B cell (primary cell): ENCODE measurements at regions of chr3 and their contacts with region 1.

Region 1: DNA sequence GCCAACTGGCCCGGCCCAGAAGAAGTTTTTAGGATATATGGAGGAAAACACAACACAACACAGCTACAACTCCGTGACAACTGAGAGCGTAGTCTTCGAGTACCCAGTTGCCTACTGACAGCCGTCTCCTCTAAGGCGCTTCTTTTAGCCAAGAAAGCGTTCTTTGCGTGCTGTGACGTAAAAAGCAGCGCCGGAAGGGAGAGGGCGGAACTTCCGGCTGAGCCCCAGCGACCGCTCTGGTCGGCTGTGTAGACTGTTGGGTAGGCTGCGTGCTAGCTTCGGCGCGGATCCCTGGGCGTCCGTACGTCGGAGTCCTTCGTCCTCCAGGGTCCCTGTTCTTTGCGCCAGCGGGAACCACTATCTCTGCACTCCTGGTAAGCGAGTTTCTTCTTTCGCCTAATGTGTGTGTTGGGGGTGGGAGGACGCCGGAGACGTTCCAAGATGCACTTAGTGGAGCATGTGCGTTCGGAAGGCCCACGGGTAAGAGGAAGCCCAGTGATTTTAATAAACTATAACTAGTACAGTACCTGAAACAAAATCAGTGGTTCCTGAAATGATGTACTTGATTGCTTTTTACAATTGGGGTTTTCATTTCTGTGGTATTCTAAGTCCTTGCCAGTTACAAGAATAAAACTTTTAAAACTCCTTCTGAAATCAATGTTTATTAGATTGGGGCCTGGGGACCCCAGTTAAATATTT is at the start of gene TRMT10C:
- DNase-seq: peak; percentile 96
- ATAC-seq: peak; percentile 94
- H3K4me3 ChIP-seq: peak within 1 kb of the TSS; percentile 86 to 96 (median 92)
- H3K4me3 Mint-ChIP-seq: peak within 1 kb of the TSS; percentile 98
- H3K27ac ChIP-seq: peak within 1 kb of the TSS; percentile 83 to 84
- H3K27ac Mint-ChIP-seq: peak within 1 kb of the TSS; percentile 94
- H3K4me1 ChIP-seq: peaks cover 23% of the 10 kb centered on the region in 2 donors
- H3K4me1 Mint-ChIP-seq: peaks cover 36% of the 10 kb centered on the region
- H3K27me3 ChIP-seq: peaks cover 0 to 25% (median 4%) of the 10 kb centered on the region in 4 experiments
- H3K27me3 Mint-ChIP-seq: peaks cover 7% of the 10 kb centered on the region
- CTCF ChIP-seq: no peak
- total RNA-seq, gene TRMT10C: 25.2 and 25.3 TPM in 2 replicates

Region 2: DNA sequence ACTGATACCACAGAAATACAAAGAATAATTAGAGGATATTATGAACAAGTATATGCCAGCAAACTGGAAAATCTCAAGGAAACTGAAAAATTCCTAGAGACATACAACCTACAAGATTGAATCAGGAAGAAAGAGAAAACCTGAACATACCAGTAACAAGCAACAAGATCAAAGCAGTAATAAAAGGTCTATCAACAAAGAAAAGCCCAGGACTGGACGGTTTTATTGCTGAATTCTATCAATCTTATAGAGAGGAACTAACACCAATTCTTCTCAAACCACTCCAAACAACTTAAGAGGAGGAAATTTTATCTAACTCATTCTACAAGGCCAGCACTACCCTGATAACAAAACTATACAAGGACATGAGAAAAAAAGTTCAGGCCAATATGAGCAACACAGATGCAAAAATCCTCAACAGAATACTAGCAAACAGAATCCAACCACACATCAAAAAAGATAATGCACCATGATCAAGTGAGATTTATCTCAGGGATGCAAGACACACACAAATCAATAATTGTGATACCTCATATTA is 170.3 kb before region 1 on chr3:
- CTCF ChIA-PET with region 1: no interaction called
- POLR2A ChIA-PET with region 1: no interaction called
- intact Hi-C with region 1: loop called (anchors 1 kb)
- DNase-seq: no peak
- ATAC-seq: no peak
- H3K4me3 ChIP-seq: no peak overlapping the region
- H3K4me3 Mint-ChIP-seq: no peak overlapping the region
- H3K27ac ChIP-seq: no peak overlapping the region
- H3K27ac Mint-ChIP-seq: peak overlapping the region; percentile 32
- H3K4me1 ChIP-seq: peaks cover 0 to 5% of the 10 kb centered on the region in 2 donors
- H3K4me1 Mint-ChIP-seq: peaks cover 32% of the 10 kb centered on the region
- H3K27me3 ChIP-seq: no peaks in the 10 kb centered on the region
- H3K27me3 Mint-ChIP-seq: no peaks in the 10 kb centered on the region
- CTCF ChIP-seq: no peak

Region 3: GRCh38 chr3:101512646-101513418 is 48.9 kb before region 1 on chr3 and contains the start of gene SENP7:
- CTCF ChIA-PET with region 1: interaction called, 3 read pairs
- POLR2A ChIA-PET with region 1: interaction called, 19 read pairs
- intact Hi-C with region 1: loop called (anchors 1 kb)
- DNase-seq: peak; percentile 89
- ATAC-seq: peak; percentile 72
- H3K4me3 ChIP-seq: peak within 1 kb of the TSS; percentile 67 to 97 (median 86)
- H3K4me3 Mint-ChIP-seq: peak within 1 kb of the TSS; percentile 100
- H3K27ac ChIP-seq: peak within 1 kb of the TSS; percentile 91 to 95
- H3K27ac Mint-ChIP-seq: peak within 1 kb of the TSS; percentile 99
- H3K4me1 ChIP-seq: peaks cover 11 to 12% of the 10 kb centered on the region in 2 donors
- H3K4me1 Mint-ChIP-seq: peaks cover 46% of the 10 kb centered on the region
- H3K27me3 ChIP-seq: peaks cover 0 to 5% (median 0%) of the 10 kb centered on the region in 4 experiments
- H3K27me3 Mint-ChIP-seq: peaks cover 11% of the 10 kb centered on the region
- CTCF ChIP-seq: no peak
- total RNA-seq, gene SENP7: 47.5 and 50.3 TPM in 2 replicates

Region 4: DNA sequence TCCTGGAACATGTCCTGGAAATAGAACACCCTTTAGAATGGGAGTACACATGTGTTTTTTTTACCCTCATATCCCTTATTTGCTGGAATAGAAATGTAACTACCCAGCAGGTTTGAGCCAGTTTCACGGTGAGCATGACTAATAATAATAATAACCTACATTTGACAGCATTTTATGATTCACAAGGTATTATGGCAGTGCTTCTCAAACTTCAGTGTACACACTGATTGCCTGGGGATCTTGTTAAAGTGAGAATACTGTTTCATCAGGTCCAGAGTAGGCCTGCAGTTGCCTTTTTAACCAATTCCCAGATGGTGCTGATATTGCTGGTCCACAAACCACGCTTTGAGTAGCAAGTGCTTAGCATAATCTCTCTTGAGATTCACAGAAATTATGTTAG is 351.4 kb after region 1 on chr3:
- CTCF ChIA-PET with region 1: no interaction called
- POLR2A ChIA-PET with region 1: no interaction called
- intact Hi-C with region 1: no loop called
- DNase-seq: no peak
- ATAC-seq: no peak
- H3K4me3 ChIP-seq: no peak overlapping the region
- H3K4me3 Mint-ChIP-seq: no peak overlapping the region
- H3K27ac ChIP-seq: no peak overlapping the region
- H3K27ac Mint-ChIP-seq: no peak overlapping the region
- H3K4me1 ChIP-seq: no peaks in the 10 kb centered on the region
- H3K4me1 Mint-ChIP-seq: peaks cover 7% of the 10 kb centered on the region
- H3K27me3 ChIP-seq: no peaks in the 10 kb centered on the region
- H3K27me3 Mint-ChIP-seq: no peaks in the 10 kb centered on the region
- CTCF ChIP-seq: no peak